BJ (cell line): ENCODE measurements at regions of chr17 and their contacts with region 1.

Region 1: GRCh38 chr17:75667021-75667790 is at the starts of genes RECQL5 and SAP30BP:
- DNase-seq: peak; percentile 88
- H3K4me3 ChIP-seq: peak within 1 kb of the TSS; percentile 73
- H3K27me3 ChIP-seq: no peaks in the 10 kb centered on the region
- CTCF ChIP-seq: no peak
- polyA plus RNA-seq, gene RECQL5: 8.2 and 14.2 TPM in 2 replicates
- polyA plus RNA-seq, gene SAP30BP: 65.3 and 84.8 TPM in 2 replicates

Region 2: GRCh38 chr17:75652915-75653549 is 14.2 kb before region 1 on chr17:
- CTCF ChIA-PET with region 1: interaction called, 25 read pairs
- POLR2A ChIA-PET with region 1: no interaction called
- DNase-seq: no peak
- H3K4me3 ChIP-seq: no peak overlapping the region
- H3K27me3 ChIP-seq: no peaks in the 10 kb centered on the region
- CTCF ChIP-seq: peak; percentile 87